Activated naive CD4-positive, alpha-beta T cell treated with anti-CD3 and anti-CD28 coated beads, Interleukin-2, amount 10 ng/mL, durations not matched to agents 7 days and 5 days (primary cell): ENCODE measurements at regions of chr2 and their contacts with region 1.

Region 1: GRCh38 chr2:38653715-38654527 is 12.0 kb upstream of the GALM start:
- DNase-seq: peak; percentile 58
- H3K4me3 Mint-ChIP-seq: peak overlapping the region; percentile 41
- H3K27ac Mint-ChIP-seq: peak overlapping the region; percentile 92
- H3K4me1 Mint-ChIP-seq: peaks cover 66% of the 10 kb centered on the region
- H3K27me3 Mint-ChIP-seq: no peaks in the 10 kb centered on the region

Region 2: DNA sequence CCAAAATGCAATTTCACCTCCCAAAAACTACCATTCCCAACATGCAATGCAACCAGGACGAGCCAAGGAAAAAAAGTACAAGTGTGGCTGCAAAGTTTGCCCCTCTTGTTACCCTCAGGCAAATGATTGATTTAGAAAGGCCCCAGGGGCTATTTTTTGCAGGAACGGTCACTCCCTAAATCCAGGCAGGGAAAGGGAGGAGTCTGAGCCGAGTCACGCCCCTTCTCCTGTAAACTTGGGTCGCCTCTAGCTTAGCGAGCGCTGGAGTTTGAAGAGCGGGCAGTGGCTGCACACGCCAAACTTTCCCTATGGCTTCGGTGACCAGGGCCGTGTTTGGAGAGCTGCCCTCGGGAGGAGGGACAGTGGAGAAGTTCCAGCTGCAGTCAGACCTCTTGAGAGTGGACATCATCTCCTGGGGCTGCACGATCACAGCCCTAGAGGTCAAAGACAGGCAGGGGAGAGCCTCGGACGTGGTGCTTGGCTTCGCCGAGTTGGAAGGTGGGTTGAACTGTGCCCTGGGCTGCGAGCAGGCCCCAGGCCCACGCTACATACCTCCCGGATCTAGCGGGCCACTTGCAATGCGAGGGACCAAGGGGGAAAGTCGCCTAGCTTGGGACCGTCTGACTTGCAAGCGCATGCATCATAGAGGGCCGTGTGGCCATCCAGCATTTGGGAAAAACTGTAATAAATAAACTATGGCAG is 12.1 kb after region 1 on chr2 and contains the start of gene GALM:
- CTCF ChIA-PET with region 1: interaction called, 14 read pairs
- DNase-seq: peak; percentile 72
- H3K4me3 Mint-ChIP-seq: peak within 1 kb of the TSS; percentile 73
- H3K27ac Mint-ChIP-seq: peak within 1 kb of the TSS; percentile 91
- H3K4me1 Mint-ChIP-seq: peaks cover 68% of the 10 kb centered on the region
- H3K27me3 Mint-ChIP-seq: no peaks in the 10 kb centered on the region